ENCODE measurements at regions of chr4 and their contacts with region 1.

Region 1: DNA sequence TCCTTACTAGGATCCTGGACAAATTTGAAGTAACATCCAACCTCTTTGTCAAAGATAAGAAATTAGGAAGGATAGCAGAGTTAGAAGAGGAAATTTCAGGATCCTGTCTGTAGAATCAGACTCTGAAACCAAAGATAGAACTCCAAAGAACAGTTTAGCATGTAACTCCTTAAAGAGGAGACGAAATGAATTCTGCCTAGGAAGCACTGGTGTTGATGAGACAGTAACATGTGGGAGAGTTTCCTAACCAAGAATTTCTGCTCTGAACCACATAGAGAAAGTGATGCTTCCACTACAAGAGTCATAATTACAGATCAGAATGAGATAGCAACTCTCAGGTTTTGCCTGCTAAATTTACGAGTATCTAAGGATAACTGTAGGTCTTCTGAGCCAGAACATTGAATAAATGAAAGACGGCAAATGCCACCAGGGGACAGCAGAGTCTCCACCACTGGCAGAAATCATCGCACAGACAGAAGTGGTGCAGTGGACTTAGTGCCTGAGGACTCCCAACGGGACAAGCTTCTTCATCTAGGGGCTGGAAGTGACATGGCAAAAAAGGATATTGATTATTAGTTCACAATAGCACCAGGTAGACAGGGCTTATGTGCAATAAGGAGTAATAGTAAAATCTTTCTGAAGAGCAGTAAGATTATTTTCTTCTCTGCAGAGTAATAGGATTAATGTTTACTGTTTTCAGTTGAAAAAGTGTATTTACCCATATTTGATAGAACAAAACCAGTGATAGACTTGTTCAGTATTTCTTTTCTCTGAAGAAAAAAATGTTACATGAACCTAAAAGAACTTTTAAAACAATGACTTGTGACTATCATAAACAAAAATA is 6.7 kb upstream of the PPID start:
- DNase-seq: peak in 2 of 3 donors; percentile 70 to 87
- ATAC-seq: peak; percentile 92
- H3K4me3 ChIP-seq: no peak overlapping the region
- H3K4me1 ChIP-seq: no peaks in the 10 kb centered on the region
- CTCF ChIP-seq: peak; percentile 55

Region 2: GRCh38 chr4:158395889-158396288 is 334.0 kb before region 1 on chr4:
- intact Hi-C with region 1: no loop called
- DNase-seq: no peak
- ATAC-seq: no peak
- H3K4me3 ChIP-seq: no peak overlapping the region
- H3K4me1 ChIP-seq: no peaks in the 10 kb centered on the region
- CTCF ChIP-seq: no peak

Region 3: DNA sequence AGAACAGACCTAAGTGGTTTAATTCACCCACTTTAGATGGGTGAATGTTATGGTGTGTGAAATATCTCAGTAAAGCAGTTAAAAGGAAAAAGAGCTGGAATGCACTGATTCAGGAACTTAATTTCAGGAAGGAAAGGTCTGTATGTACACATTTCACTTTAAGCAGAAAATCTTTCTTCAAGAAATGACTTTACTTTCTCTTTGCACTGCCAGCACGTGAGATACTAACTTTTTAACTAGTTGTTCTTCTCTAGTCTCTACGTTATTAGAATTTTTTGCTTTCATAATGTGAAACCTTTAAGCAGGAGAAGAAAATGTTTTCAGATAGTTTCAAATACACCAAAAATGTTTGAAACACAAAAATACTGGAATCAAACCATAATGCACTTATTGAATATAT is 77.0 kb before region 1 on chr4:
- intact Hi-C with region 1: no loop called
- DNase-seq: no peak
- ATAC-seq: no peak
- H3K4me3 ChIP-seq: no peak overlapping the region
- H3K4me1 ChIP-seq: no peaks in the 10 kb centered on the region
- CTCF ChIP-seq: no peak

Region 4: DNA sequence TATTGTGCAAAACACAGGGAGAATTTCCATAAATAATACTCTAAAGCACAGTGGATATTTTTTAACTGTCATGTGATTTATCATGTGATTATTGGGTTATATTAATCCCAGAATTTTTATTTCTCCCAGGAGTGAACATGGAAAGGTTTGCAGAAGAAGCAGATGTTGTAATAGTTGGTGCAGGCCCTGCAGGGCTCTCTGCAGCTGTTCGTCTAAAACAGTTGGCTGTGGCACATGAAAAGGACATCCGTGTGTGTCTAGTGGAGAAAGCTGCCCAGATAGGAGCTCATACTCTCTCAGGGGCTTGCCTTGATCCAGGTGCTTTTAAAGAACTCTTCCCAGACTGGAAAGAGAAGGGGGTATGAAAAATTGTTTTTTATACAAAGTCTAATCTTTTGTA is 47.9 kb before region 1 on chr4:
- intact Hi-C with region 1: no loop called
- DNase-seq: no peak
- ATAC-seq: no peak
- H3K4me3 ChIP-seq: no peak overlapping the region
- H3K4me1 ChIP-seq: no peaks in the 10 kb centered on the region
- CTCF ChIP-seq: no peak

Region 5: DNA sequence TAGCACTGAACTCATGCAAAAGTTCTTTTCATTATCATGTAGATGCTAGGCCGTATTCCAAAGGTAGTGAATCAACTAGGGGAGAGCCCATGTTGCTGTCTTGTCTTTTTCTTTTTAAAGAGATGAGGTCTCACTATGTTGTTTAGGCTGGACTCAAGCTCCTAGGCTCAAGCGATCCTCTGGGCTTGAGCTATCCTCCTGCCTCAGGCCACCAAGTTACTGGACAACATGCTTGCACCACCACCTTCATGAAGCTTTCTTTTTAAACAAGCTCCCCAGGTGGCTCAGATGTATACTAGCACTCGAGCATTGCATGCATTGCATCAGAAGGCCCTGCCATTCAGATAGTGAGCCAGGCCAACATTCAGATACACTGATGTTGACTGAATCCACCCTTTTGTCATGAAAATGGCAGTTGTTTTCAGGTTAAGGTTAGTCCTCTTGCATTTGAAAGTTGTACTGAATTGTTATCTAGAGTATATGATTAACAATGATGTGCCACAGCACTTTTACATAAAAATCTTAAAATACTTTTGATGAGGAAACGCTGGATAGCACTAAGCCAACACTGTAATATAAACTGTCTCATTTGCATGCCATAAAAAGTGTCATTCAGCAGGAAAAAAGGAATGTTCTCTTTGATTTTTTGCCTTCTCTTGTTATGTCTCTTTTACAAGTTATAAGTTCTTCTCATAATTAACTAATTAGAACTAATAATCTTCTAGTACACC is 115.5 kb after region 1 on chr4:
- intact Hi-C with region 1: loop called (anchors 2 to 10 kb)
- DNase-seq: no peak
- ATAC-seq: peak; percentile 70
- H3K4me3 ChIP-seq: no peak overlapping the region
- H3K4me1 ChIP-seq: peaks cover 7% of the 10 kb centered on the region
- CTCF ChIP-seq: no peak

Region 6: GRCh38 chr4:158850800-158851644 is 121.1 kb after region 1 on chr4:
- intact Hi-C with region 1: loop called (anchors 2 to 10 kb)
- DNase-seq: no peak
- ATAC-seq: peak; percentile 52
- H3K4me3 ChIP-seq: no peak overlapping the region
- H3K4me1 ChIP-seq: peaks cover 7% of the 10 kb centered on the region
- CTCF ChIP-seq: peak; percentile 34

Region 7: GRCh38 chr4:159102622-159103383 is 372.9 kb after region 1 on chr4 and contains the start of gene RAPGEF2:
- intact Hi-C with region 1: no loop called
- DNase-seq: peak; percentile 92 to 94 (median 93)
- ATAC-seq: peak; percentile 96
- H3K4me3 ChIP-seq: peak within 1 kb of the TSS; percentile 79
- H3K4me1 ChIP-seq: peaks cover 22% of the 10 kb centered on the region
- CTCF ChIP-seq: no peak
- total RNA-seq, gene RAPGEF2: 42.8 to 68.2 (median 55.1) TPM